ENCODE measurements at regions of chr22 and their contacts with region 1.

Region 1: DNA sequence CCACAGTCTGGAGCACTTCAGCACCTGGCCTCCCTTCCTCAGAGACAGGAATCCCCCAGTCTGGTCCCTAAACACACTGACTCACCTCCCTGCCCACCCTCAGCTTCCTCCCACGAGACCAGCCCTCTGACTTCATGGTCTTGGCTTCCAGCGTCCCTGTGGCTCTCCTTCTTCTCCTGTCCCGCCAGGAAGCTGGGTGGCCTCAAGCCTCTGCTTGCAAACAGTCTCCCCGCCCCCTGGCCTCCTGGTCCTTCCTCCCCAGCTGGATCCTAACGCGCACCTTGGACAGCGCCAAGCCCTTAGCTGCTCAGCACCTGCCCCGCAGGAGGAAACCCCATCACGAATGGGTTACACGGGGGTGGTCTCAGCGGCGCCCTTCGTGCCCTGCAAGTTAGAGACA is 4.5 kb downstream of the NCF4 start:
- DNase-seq: peak; percentile 25
- H3K4me3 ChIP-seq: no peak overlapping the region
- H3K27ac ChIP-seq: no peak overlapping the region
- H3K4me1 ChIP-seq: peaks cover 9% of the 10 kb centered on the region
- H3K27me3 ChIP-seq: no peaks in the 10 kb centered on the region
- CTCF ChIP-seq: no peak

Region 2: GRCh38 chr22:36734171-36735058 is 130.9 kb before region 1 on chr22:
- CTCF ChIA-PET with region 1: no interaction called
- dilution Hi-C with region 1: no loop called
- in situ Hi-C with region 1: no loop called
- intact Hi-C with region 1: no loop called
- DNase-seq: peak; percentile 16
- H3K4me3 ChIP-seq: no peak overlapping the region
- H3K27ac ChIP-seq: no peak overlapping the region
- H3K4me1 ChIP-seq: peaks cover 9% of the 10 kb centered on the region
- H3K27me3 ChIP-seq: no peaks in the 10 kb centered on the region
- CTCF ChIP-seq: no peak

Region 3: DNA sequence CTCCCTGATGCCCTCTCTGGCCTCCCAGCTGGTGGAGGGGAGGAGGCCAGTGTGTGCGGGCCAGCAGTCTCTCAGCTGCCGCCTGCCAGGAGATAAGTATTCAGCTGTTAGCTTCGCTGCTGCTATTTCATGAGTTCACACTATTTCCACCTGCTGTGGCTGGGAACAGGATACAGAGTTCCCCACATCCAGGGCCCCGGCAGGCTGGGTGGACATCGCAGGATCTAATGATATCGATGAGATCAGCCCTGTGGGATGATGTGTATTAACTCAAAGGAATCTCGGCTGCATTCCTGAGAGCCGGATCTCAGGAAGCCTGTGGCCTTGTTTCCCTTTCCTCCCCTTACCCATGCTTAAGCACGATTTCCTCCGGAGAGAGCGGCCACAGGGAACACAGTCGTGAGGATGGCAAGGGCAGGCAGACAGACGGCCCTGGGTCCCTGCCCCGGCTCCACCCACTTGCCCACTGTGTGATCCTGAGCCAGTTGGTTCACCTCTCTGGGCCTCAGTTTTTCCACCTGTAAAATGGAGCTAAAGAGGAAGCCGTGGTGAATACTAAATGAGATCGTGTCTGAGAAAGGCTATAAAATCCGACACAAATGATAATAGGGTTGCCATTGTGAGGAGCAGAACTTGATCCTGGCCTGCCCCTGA is 42.0 kb before region 1 on chr22:
- CTCF ChIA-PET with region 1: no interaction called
- dilution Hi-C with region 1: loop called (anchors 5 kb)
- in situ Hi-C with region 1: no loop called
- intact Hi-C with region 1: no loop called
- DNase-seq: no peak
- H3K4me3 ChIP-seq: no peak overlapping the region
- H3K27ac ChIP-seq: no peak overlapping the region
- H3K4me1 ChIP-seq: no peaks in the 10 kb centered on the region
- H3K27me3 ChIP-seq: no peaks in the 10 kb centered on the region
- CTCF ChIP-seq: no peak